ENCODE measurements at regions of chr11 and their contacts with region 1.

Region 1: GRCh38 chr11:46026606-46027293 is 94.5 kb downstream of the PHF21A start:
- DNase-seq: no peak
- H3K4me3 ChIP-seq: no peak overlapping the region
- H3K27ac ChIP-seq: no peak overlapping the region
- H3K4me1 ChIP-seq: no peaks in the 10 kb centered on the region
- H3K27me3 ChIP-seq: no peaks in the 10 kb centered on the region
- CTCF ChIP-seq: no peak

Region 2: GRCh38 chr11:45846974-45847910 is 179.5 kb before region 1 on chr11 and contains the start of gene CRY2:
- CTCF ChIA-PET with region 1: no interaction called
- POLR2A ChIA-PET with region 1: no interaction called
- intact Hi-C with region 1: no loop called
- DNase-seq: peak; percentile 100
- H3K4me3 ChIP-seq: peak within 1 kb of the TSS; percentile 74
- H3K27ac ChIP-seq: peak within 1 kb of the TSS; percentile 87
- H3K4me1 ChIP-seq: peaks cover 25% of the 10 kb centered on the region
- H3K27me3 ChIP-seq: peaks cover 12% of the 10 kb centered on the region
- CTCF ChIP-seq: no peak
- total RNA-seq, gene CRY2: 46.4 and 47.0 TPM in 2 replicates

Region 3: GRCh38 chr11:46361283-46362155 is 334.8 kb after region 1 on chr11:
- CTCF ChIA-PET with region 1: no interaction called
- POLR2A ChIA-PET with region 1: interaction called, 12 read pairs
- intact Hi-C with region 1: no loop called
- DNase-seq: peak; percentile 97
- H3K4me3 ChIP-seq: peak overlapping the region; percentile 20
- H3K27ac ChIP-seq: peak overlapping the region; percentile 85
- H3K4me1 ChIP-seq: peaks cover 25% of the 10 kb centered on the region
- H3K27me3 ChIP-seq: no peaks in the 10 kb centered on the region
- CTCF ChIP-seq: no peak

Measured in A673 (cell line).